ENCODE measurements at regions of chr2 and their contacts with region 1.

Region 1: GRCh38 chr2:240972636-240973521 is 25.5 kb upstream of the SNED1 start:
- DNase-seq: no peak
- ATAC-seq: no peak
- H3K4me3 Mint-ChIP-seq: no peak overlapping the region
- H3K27ac Mint-ChIP-seq: no peak overlapping the region
- H3K4me1 Mint-ChIP-seq: peaks cover 5% of the 10 kb centered on the region
- H3K27me3 Mint-ChIP-seq: peaks cover 4% of the 10 kb centered on the region
- CTCF ChIP-seq: no peak

Region 2: GRCh38 chr2:240983361-240983995 is 10.6 kb after region 1 on chr2:
- CTCF ChIA-PET with region 1: interaction called, 12 read pairs
- POLR2A ChIA-PET with region 1: no interaction called
- intact Hi-C with region 1: no loop called
- DNase-seq: peak; percentile 53
- ATAC-seq: peak; percentile 94
- H3K4me3 Mint-ChIP-seq: no peak overlapping the region
- H3K27ac Mint-ChIP-seq: no peak overlapping the region
- H3K4me1 Mint-ChIP-seq: no peaks in the 10 kb centered on the region
- H3K27me3 Mint-ChIP-seq: no peaks in the 10 kb centered on the region
- CTCF ChIP-seq: peak; percentile 75

Measured in activated CD8-positive, alpha-beta T cell treated with anti-CD3 and anti-CD28 coated beads for 36 hours (primary cell).